Activated CD4-positive, alpha-beta memory T cell treated with anti-CD3 and anti-CD28 coated beads for 36 hours (primary cell): ENCODE measurements at regions of chr22 and their contacts with region 1.

Region 1: GRCh38 chr22:39859903-39860588 is 33.5 kb downstream of the ENTHD1 start:
- DNase-seq: no peak
- H3K4me3 Mint-ChIP-seq: no peak overlapping the region
- H3K27ac Mint-ChIP-seq: peak overlapping the region; percentile 16
- H3K4me1 Mint-ChIP-seq: peaks cover 17% of the 10 kb centered on the region
- H3K27me3 Mint-ChIP-seq: peaks cover 4% of the 10 kb centered on the region

Region 2: DNA sequence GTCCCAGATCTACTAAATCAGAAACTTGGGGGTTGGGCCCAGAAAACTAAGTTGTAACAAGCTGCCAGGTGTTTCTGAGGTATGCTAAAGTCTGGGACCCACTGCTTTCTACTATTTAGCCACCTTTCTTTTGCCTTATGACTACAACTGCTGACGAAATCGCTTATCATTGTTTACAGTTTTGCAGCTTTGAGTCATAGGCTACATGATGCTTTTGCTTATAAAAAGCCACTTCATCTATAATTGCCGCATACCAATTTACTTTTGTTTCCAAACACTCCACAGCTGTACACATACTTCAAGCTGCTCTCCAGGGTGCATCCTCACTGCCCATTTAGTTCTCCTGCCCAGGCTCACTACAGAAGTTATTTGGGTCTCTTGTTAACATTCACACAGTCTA is 111.2 kb before region 1 on chr22:
- CTCF ChIA-PET with region 1: no interaction called
- POLR2A ChIA-PET with region 1: no interaction called
- intact Hi-C with region 1: loop called (anchors 10 kb)
- DNase-seq: no peak
- H3K4me3 Mint-ChIP-seq: no peak overlapping the region
- H3K27ac Mint-ChIP-seq: no peak overlapping the region
- H3K4me1 Mint-ChIP-seq: peaks cover 22% of the 10 kb centered on the region
- H3K27me3 Mint-ChIP-seq: no peaks in the 10 kb centered on the region

Region 3: DNA sequence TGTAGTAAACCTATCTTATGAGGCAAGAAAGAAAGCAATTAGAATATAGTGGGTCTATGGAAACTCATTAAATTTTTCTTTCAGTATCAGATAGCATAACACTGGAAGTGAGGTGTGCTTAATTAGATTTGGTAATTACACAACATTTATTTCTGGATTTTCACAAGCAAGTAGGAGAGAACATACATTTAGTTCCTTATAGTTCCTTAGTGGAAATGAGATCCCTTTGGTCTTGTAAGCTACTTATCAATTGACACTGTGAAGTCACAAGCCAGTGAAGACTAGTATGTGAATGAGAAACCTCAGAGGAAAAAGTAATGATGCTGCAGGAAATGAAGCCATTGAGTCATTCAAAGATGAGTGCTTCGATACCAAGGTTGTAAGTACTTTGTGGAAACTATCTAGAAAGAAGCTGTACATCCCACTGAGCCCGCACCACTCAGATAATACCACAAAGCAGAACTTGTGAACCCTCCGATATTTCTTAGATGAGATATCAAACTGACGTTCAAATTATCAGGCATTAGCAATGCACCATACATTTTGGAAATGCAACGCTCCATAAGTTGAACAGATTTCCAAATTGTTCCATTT is 20.0 kb before region 1 on chr22:
- CTCF ChIA-PET with region 1: no interaction called
- POLR2A ChIA-PET with region 1: no interaction called
- intact Hi-C with region 1: loop called (anchors 2 kb)
- DNase-seq: peak; percentile 63
- H3K4me3 Mint-ChIP-seq: no peak overlapping the region
- H3K27ac Mint-ChIP-seq: no peak overlapping the region
- H3K4me1 Mint-ChIP-seq: peaks cover 14% of the 10 kb centered on the region
- H3K27me3 Mint-ChIP-seq: no peaks in the 10 kb centered on the region

Region 4: DNA sequence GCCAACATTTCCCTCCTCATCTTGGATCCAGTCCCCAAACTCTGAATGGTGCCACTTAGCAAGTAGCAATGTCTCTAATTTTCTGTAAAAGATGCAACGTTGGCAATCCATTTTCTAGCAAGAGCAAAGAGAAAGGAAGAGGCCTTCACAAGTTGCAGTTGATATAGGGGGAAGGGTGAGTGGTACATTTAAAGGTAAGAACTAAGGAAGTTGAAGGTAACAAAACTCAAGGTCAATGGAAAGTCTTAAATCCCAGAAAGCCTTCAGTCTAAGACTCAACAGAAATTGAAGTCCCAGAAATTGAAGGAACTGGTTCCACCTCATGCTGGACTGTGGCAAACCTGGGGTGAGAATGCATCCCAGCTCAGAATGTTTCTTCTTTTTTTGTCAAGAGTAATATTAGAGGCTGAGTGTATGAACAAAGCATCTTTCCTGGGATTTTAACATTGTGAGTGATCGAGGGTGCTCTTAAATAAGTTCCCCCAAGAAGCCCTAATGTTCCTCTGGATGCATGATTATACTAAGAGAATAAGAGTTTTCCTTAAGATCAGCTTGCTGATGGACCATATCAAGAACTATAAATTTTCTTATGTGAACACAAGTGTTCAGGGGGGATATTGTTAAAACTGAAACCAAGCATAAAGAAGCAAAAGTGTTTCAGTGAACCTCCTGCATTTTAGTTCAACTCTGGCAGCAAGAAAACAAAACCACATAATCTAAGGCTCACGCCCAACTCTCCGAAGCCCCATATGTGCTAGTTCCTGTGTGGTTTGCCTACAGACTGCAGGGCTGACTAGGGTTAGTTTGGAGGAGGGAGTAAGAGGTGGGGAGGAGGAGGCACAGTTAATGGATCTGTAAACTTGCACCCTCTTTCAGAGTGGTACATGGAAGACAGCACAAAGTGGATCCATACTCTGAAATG is 40.5 kb after region 1 on chr22 and contains the start of gene GRAP2:
- CTCF ChIA-PET with region 1: interaction called, 3 read pairs
- POLR2A ChIA-PET with region 1: no interaction called
- intact Hi-C with region 1: loop called (anchors 5 kb)
- DNase-seq: peak; percentile 80
- H3K4me3 Mint-ChIP-seq: peak within 1 kb of the TSS; percentile 84
- H3K27ac Mint-ChIP-seq: peak within 1 kb of the TSS; percentile 93
- H3K4me1 Mint-ChIP-seq: peaks cover 18% of the 10 kb centered on the region
- H3K27me3 Mint-ChIP-seq: no peaks in the 10 kb centered on the region
- total RNA-seq, gene GRAP2: 37.7 to 38.1 TPM

Region 5: GRCh38 chr22:39932918-39933649 is 73.0 kb after region 1 on chr22:
- CTCF ChIA-PET with region 1: no interaction called
- POLR2A ChIA-PET with region 1: no interaction called
- intact Hi-C with region 1: no loop called
- DNase-seq: peak; percentile 76
- H3K4me3 Mint-ChIP-seq: peak overlapping the region; percentile 74
- H3K27ac Mint-ChIP-seq: peak overlapping the region; percentile 79
- H3K4me1 Mint-ChIP-seq: peaks cover 58% of the 10 kb centered on the region
- H3K27me3 Mint-ChIP-seq: no peaks in the 10 kb centered on the region